Mucosa of descending colon (tissue), 3 donors: ENCODE measurements at regions of chr10 and their contacts with region 1.

Region 1: GRCh38 chr10:32346134-32346550 is 816 bp downstream of the EPC1 start:
- DNase-seq: peak; percentile 95 to 98 (median 96)
- ATAC-seq: peak; percentile 95
- H3K4me3 ChIP-seq: peak overlapping the region; percentile 86
- H3K4me1 ChIP-seq: peaks cover 36% of the 10 kb centered on the region
- CTCF ChIP-seq: peak; percentile 97

Region 2: DNA sequence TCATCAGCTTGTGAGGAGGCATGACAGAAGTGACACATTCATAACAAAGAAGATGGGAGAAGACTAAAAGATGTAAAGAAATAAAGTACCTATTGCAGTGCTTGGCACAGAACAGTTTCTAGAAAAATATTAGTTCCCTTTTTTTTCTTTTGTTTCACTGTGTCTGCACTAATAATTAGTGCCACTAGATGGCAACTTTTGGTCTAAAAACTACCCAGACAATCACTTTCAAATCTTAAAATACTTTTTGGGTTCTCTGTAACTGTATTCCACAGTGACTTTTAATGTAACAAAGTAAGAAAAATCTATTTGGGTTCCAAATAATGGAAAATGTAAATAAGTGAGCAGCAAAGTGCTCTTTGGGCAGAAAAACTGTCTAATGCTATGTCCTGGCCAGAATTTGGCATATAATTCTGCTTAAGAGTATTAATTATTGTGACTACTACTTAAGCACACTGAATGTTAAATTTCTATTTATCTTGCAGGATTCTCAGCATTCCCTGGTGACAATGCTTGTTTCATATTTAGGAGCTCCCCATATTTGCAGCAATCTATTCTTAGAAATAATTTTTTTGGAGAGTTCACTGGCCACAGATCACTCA is 155.2 kb before region 1 on chr10:
- intact Hi-C with region 1: loop called in 1 of 2 experiments (anchors 10 kb)
- DNase-seq: no peak
- ATAC-seq: peak; percentile 39
- H3K4me3 ChIP-seq: no peak overlapping the region
- H3K4me1 ChIP-seq: peaks cover 5% of the 10 kb centered on the region
- CTCF ChIP-seq: peak; percentile 51

Region 3: DNA sequence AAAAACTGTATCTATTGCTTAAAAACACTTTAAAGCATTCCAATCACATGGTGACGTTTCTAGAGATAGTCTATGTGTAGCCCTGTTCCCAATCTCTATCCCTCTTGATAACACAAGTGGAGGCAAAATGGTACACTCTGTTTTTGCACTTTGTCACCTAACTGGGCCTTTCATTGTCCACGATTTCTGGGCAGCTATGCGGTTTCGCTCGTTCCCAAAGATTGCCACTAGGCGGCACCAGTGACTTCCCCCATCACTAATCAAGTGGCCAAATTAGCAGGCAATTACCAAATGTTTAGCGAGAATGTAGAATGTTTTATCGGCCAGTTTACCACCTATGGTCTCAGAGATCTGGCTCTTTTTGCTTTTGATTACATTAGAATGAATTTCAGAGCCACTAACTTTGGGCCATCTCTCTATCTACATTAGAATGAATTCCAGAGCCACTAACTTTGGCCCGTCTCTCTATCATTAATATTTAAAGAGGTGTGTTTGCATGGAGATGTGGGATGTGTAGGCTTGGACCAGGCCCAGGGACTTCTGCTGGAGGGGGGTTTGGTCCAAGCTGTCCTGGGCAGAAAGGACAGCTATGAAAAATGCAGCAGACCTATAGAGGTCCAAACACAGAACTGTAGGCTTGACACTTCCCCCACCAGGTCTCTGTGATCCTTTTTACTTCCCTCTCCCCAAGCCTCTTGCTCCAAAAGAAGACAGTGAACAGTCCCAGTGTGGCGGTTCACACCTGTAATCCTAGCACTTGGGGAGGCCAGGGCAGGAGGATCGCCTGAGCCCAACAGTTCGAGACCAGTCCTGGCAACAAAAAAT is 89.3 kb before region 1 on chr10:
- intact Hi-C with region 1: loop called (anchors 10 kb)
- DNase-seq: peak in 2 of 3 donors; percentile 78 to 84
- ATAC-seq: peak; percentile 76
- H3K4me3 ChIP-seq: no peak overlapping the region
- H3K4me1 ChIP-seq: no peaks in the 10 kb centered on the region
- CTCF ChIP-seq: peak; percentile 79

Region 4: DNA sequence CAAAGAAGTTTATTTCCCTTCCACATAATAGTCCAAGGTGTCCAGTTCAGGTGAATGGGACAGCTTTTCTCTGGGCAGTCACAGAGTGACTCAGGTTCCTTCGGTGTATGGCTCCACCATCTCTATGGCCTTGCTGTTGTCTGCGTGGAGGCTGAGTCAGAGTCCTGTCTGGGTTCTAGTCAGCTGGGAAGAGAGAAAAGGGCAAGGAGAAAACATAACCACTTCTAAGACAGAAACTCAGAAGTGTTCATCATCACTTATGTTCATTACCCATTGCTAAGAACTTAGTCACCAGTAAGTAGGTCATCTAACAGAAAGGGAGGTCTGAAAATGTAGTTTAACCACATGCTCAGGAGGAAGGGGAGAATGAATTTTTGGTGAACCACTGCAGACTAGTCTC is 67.4 kb after region 1 on chr10:
- intact Hi-C with region 1: no loop called
- DNase-seq: no peak
- ATAC-seq: peak; percentile 66
- H3K4me3 ChIP-seq: no peak overlapping the region
- H3K4me1 ChIP-seq: no peaks in the 10 kb centered on the region
- CTCF ChIP-seq: no peak